Mucosa of descending colon (tissue), 3 donors: ENCODE measurements at regions of chr9 and their contacts with region 1.

Region 1: GRCh38 chr9:132575005-132575609 is 7.3 kb upstream of the BARHL1 start:
- DNase-seq: peak; percentile 64 to 84 (median 73)
- ATAC-seq: peak; percentile 95
- H3K4me3 ChIP-seq: no peak overlapping the region
- H3K4me1 ChIP-seq: no peaks in the 10 kb centered on the region
- CTCF ChIP-seq: peak; percentile 31

Region 2: DNA sequence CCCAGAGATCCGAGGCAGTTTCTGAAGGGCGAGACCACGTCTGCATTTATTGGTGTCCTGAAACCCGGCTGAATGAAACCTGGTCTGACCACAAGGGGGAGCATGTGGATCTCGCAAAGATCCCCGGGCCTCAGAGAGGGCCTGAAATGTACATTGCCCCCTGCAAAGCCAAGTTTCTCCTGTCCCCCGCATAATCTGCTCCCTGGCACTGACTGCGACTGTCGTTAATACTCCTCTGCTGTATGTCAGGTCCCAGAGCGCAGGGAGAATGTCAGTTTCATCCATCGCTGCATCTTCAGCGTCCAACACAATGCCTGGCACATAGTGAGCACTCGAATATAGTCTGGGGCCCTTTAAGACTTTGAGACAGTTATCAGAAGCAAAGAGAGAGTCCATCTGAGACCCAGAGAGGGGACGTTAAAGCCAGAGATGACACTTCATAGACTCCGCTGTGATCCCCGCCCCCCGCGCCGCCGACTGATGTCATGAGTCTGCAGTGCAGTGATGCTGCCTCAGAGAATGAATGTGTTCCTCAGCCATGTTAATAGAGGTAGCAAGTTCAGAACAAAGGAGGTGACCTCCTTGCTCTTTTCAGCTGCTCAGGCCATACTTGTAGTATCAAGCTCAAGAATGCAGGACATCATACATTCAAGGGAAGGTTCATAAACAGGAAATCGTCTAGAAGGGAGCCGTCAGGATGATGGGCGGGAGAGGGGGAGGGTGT is 67.2 kb before region 1 on chr9:
- intact Hi-C with region 1: loop called in 1 of 2 experiments (anchors 5 kb)
- DNase-seq: peak in 2 of 3 donors; percentile 70 to 88
- ATAC-seq: peak; percentile 76
- H3K4me3 ChIP-seq: no peak overlapping the region
- H3K4me1 ChIP-seq: no peaks in the 10 kb centered on the region
- CTCF ChIP-seq: peak; percentile 50